IMR-90 (cell line): ENCODE measurements at regions of chr15 and their contacts with region 1.

Region 1: DNA sequence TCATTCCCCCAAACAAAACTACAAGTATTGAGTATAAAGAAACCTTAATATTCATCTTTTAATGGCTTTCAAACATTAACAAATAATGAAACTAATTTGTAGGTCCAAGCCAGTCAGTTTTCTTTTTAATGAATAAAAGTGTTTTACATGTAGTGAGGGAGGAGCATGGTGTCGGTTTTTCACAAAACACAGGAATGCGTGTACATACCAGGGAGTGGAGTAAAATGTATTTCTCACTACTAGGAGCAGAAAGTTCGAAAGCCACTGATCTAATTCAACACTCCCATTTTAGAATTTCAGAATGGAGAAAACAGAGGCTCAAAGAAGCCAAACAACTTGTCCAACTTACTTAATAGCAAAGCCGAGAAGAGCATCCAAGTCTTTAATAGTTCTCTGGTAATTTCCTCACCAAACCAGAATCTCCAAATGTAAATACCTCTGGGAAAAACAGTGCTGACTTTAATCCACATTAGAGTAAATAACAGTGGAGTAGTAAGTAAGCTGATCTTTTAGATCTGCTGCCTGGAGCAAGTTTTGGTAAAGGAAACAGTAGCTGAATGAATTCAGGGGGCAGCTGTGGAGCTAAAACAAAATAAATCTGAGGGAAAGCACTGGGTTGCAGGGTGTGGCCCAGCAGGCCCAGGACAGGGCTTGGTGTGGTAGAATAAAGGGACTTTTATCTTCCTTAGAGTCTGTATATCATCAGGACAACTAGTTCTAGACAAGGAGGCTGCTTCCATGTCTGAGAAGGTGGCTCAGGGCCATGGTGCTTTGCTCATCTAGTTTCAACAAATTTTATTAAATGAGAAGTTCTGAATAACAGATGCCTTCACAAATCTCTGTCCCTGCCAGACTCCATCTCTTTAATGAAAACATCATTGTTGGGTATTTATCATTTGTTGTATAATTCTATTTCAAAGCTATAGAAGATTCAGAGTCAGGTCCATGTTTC is 7.8 kb downstream of the ANP32A start:
- DNase-seq: no peak
- ATAC-seq: peak; percentile 52
- H3K4me3 ChIP-seq: no peak overlapping the region
- H3K27ac ChIP-seq: peak overlapping the region; percentile 23; the same call in 1 of the 2 replicates
- H3K4me1 ChIP-seq: peaks cover 19% of the 10 kb centered on the region
- H3K27me3 ChIP-seq: no peaks in the 10 kb centered on the region
- CTCF ChIP-seq: no peak
- POLR2A ChIP-seq: no peak
- RAD21 ChIP-seq: no peak

Region 2: DNA sequence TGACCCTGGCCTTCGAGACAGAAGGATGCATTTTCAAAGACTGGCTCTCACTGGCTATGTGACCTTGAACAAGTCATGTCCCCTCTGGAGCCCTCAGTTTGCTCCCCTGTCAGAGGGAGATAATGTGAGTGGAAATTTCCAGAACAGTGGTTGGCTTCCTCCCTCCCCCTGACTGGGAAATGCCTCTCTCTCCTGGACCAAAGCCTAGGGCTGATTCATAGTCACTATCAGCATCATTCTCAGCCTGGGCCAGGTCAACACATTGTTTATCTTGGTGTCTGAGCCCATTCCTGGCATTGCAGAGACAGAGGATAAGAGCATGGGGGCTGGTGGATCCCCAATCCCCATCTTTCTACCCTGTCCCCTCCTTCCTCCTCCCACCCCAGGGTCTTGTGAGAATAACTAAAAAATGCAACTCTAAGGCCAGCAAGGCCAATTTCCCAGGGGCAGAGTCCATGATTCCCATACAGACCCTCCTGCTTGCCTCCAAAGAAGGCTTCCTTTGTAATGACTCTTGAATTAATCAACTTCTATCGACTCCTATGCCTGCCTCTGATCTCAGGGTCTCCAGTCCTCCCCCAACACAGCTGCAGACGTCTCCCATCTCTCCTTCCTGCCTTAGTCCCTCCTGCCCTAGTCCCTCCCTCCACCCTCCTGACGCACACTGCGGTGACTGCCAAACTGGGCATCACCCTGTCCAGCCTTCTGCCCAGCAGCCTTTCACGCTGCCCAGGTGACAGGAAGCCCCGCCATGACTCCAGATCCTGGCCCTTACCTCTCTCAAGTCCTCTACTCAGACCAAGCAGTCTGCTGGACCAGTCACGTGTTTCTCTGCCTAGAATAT is 269.5 kb before region 1 on chr15:
- CTCF ChIA-PET with region 1: no interaction called
- POLR2A ChIA-PET with region 1: no interaction called
- dilution Hi-C with region 1: no loop called
- in situ Hi-C with region 1: no loop called
- intact Hi-C with region 1: no loop called
- DNase-seq: peak; percentile 96
- ATAC-seq: peak; percentile 90
- H3K4me3 ChIP-seq: no peak overlapping the region
- H3K27ac ChIP-seq: peak overlapping the region; percentile 82
- H3K4me1 ChIP-seq: peaks cover 15% of the 10 kb centered on the region
- H3K27me3 ChIP-seq: no peaks in the 10 kb centered on the region
- CTCF ChIP-seq: no peak
- POLR2A ChIP-seq: no peak
- RAD21 ChIP-seq: peak; percentile 12; the same call in 1 of the 2 replicates

Region 3: GRCh38 chr15:68795298-68795848 is 17.5 kb before region 1 on chr15:
- CTCF ChIA-PET with region 1: no interaction called
- POLR2A ChIA-PET with region 1: no interaction called
- dilution Hi-C with region 1: no loop called
- in situ Hi-C with region 1: no loop called
- intact Hi-C with region 1: loop called (anchors 2 kb)
- DNase-seq: peak; percentile 57
- ATAC-seq: peak; percentile 93
- H3K4me3 ChIP-seq: no peak overlapping the region
- H3K27ac ChIP-seq: no peak overlapping the region
- H3K4me1 ChIP-seq: peaks cover 10% of the 10 kb centered on the region
- H3K27me3 ChIP-seq: no peaks in the 10 kb centered on the region
- CTCF ChIP-seq: no peak
- POLR2A ChIP-seq: no peak
- RAD21 ChIP-seq: no peak